GM10248 (cell line): ENCODE measurements at regions of chr1 and their contacts with region 1.

Region 1: DNA sequence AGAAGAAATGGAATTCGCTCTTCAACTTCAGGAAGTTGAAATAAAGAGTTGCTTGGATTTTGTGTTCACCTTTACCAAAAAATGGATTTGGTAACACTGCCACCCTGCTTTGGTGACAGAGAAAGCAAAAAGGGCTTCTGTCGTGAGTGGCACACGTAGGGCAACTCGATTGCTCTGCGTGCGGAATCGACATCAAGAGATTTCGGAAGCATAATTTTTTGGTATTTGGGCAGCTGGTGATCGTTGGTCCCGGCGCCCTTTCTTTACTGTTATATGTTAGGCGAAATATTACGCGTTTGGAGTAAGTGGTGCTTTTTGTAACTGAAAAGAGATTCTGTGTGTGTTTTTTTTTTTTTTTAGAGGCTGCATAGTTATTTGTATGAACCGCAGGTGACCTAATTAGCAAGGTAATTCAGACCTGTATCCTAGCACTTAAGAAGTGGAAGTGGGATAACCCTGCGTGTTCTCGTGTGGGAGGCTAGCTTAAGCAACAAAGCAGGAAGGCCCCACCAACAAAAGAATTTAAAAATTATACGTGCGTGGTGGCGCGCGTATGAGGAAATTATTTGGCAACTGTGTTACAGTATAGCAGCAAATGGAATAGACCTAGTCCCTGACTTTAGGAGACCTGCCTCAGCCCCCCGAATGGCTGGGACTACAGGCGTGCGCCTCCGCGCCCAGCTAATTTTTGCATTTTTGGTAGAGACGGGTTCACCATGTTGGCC is at the start of gene RNU11:
- DNase-seq: peak; percentile 76
- CTCF ChIP-seq: no peak

Region 2: DNA sequence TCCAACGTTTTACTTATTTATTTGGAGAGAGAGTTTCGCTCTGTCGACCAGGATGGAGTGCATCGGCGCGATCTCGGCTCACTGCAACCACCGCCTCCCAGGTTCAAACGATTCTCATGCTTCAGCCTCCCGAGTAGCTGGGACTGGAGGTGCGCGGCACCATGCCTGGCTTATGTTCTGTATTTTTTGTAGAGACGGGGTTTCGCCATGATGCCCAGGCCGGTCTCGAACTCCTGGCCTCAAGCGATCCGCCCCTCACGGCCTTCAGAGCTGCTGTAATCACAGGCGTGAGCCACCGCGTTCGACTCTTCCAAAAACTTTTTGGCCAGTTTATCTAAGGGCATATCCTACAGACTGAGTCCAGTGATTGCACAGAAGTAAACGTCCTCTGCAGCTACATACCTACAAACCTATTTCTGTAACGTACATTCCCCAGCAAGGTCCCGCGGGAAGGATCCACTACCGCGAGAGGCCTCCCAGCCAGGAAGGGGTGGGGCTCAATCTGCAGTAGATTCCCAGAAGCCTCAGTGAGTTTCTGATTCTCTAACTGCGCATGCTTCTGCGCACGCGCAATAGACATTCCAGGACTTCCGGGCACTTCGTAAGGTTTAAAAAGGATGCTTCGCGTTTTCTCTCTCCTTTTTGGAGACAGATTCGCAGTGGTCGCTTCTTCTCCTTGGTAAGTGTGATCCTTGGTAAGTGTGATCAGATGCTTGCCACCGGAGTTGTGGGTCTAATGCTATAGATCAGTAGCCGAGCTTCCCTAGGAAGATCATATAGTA is 143.0 kb before region 1 on chr1 and contains the start of gene RCC1:
- CTCF ChIA-PET with region 1: no interaction called
- POLR2A ChIA-PET with region 1: interaction called, 20 read pairs
- DNase-seq: peak; percentile 97
- CTCF ChIP-seq: no peak

Region 3: DNA sequence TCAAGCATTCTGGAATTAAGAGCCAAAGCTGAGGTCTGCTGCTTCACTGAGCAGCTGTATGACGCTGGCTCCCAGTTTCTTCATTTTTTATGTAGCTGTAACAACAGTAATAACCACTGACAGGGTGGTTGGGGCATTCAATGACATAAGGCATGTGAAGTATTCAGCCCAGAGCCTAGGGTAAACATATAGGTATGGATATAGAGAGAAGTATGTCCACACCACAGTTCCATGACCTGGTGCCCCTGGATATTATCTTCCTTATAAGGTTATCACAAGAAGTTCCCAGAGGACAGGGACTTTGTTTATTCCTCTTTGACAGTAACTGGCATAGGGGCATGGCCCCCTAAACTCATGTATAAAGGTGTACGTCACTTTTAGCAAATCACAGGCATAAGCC is 41.9 kb before region 1 on chr1:
- CTCF ChIA-PET with region 1: no interaction called
- POLR2A ChIA-PET with region 1: no interaction called
- DNase-seq: no peak
- CTCF ChIP-seq: no peak

Region 4: GRCh38 chr1:28668191-28668955 is 19.7 kb after region 1 on chr1 and contains the start of gene GMEB1:
- CTCF ChIA-PET with region 1: interaction called, 4 read pairs
- POLR2A ChIA-PET with region 1: interaction called, 11 read pairs
- DNase-seq: peak; percentile 96
- CTCF ChIP-seq: no peak